Posterior vena cava (tissue), 2 donors: ENCODE measurements at regions of chr6 and their contacts with region 1.

Region 1: GRCh38 chr6:110398778-110399177 is 16.6 kb downstream of the DDO start:
- DNase-seq: no peak

Region 2: DNA sequence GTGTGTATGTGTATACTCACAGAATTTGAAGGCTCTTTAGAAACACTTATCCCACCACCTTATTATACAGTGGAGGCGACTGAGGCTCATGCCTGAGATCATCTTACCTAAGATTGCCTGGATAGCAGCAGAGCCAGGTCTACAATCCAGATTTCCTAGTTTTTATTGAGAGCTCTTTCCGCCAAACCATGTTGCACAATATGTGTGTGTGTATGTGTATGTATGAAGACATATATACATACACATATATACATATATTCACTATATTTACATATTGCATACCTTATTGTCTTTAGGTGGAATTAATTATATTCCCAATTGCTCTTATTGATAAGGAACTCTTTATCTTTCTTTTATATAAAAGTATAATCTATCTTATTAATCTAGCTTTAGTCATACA is 1973.3 kb before region 1 on chr6:
- intact Hi-C with region 1: loop called in 1 of 2 experiments (anchors 5 kb)
- DNase-seq: no peak

Region 3: GRCh38 chr6:109705258-109705657 is 693.5 kb before region 1 on chr6:
- intact Hi-C with region 1: loop called (anchors 10 kb)
- DNase-seq: peak; percentile 91

Region 4: DNA sequence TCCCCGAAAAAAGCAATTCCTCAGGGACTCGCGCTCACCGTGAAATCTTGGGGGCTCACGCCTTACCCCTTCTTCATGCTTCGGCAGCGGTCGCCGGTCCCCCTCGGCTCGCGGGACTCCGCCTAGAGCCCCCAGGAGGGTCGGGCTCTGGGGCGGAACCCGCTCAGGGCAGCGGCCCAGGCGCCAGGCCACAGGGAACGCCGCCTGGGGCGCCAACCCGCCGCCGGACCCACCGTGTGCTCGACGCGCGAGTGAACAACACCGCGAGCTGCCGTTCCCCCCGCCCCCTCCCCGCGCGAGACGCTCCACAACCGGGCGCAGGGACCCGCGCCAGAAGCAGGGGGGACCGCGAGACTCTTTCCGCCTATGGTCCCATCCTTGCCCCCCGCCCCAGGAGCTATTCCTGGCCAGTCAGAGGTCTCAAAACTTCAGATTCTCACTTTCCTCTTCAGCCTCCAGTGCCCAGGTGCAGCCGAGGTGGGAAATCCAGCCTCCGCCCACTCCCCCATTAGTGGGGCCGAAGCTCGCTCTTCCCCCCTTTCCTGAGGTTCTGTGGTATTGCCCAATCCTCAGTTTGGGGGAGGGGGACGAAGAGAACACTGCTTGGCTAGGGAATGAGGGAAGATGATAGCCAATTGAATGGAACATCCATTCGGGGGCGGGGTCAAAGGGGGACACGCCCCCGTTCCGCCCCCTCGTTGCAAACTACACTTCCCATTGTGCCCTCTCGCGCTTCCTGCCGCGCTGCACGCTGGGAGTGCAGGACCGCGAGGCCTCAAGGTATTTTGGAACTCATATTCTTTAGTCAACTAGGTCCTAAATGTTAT is 219.2 kb before region 1 on chr6 and contains the start of gene WASF1:
- intact Hi-C with region 1: loop called in 1 of 2 experiments (anchors 10 kb)
- DNase-seq: peak; percentile 98
- total RNA-seq, gene WASF1: 11.0 to 13.7 TPM